MCF 10A (cell line): ENCODE measurements at regions of chr12 and their contacts with region 1.

Region 1: DNA sequence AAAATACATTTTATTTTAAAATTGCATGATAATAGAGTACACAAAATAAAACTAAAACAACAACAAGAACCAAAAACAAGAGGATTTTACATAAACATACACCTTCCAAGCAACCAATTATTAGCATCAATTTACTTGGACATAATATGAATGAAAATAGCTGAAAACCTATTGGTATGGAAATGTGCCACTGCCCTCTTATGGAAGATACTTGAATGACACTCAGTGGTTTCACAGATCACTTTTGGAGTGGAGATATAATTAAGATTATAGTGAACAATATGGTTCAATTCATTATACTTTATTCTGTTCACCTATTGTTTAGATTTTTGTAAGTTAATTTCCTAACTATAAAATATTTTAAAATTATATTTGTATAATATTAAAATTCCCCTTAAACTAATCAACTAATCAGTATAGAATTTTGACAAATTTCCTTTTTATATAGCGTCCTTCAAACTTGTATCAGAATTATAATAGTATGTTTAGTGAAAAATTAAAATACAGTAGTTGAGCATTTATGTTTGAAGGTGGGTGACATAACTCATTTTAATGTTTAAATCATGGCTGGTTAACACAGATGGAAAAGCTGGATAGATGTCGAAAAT is 70.1 kb downstream of the SLC6A15 start:
- DNase-seq: peak; percentile 59
- H3K4me3 Mint-ChIP-seq: no peak overlapping the region
- H3K27ac Mint-ChIP-seq: no peak overlapping the region
- H3K4me1 Mint-ChIP-seq: no peaks in the 10 kb centered on the region
- H3K27me3 Mint-ChIP-seq: no peaks in the 10 kb centered on the region
- CTCF ChIP-seq: peak; percentile 59

Region 2: DNA sequence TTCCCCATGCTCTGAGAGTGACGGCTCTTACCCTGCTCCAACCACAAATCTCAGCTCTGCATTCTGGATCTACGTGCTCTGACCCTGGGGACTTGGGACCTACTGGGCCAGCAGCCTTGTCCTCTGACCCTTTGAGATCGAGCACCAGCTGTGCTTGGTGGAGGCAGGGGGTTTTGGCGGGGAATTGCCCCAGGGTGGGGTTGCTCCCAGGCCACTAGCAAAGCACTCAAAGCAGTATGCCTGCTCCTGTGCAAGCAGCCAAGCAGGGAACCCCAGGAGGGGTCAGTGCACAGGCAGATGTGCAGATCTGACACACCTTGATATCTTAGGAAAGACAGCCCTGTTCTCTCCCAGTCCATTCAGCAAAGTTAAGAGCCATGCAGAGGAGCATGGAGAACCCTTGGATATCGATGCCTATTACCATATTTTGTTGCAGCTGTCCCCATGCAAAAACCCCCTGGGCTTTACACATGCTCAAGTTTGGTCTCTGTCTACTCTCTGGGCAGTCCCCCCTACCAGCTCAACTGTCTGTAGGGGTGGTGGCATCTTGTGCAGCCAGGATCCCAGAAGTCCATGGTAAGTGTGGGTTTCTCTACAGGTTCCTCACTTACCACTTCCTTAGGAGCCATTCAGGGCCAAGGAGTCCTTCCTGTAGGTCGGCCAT is 1836.8 kb before region 1 on chr12:
- CTCF ChIA-PET with region 1: no interaction called
- POLR2A ChIA-PET with region 1: no interaction called
- intact Hi-C with region 1: loop called (anchors 10 kb)
- DNase-seq: no peak
- H3K4me3 Mint-ChIP-seq: no peak overlapping the region
- H3K27ac Mint-ChIP-seq: no peak overlapping the region
- H3K4me1 Mint-ChIP-seq: no peaks in the 10 kb centered on the region
- H3K27me3 Mint-ChIP-seq: no peaks in the 10 kb centered on the region
- CTCF ChIP-seq: no peak

Region 3: DNA sequence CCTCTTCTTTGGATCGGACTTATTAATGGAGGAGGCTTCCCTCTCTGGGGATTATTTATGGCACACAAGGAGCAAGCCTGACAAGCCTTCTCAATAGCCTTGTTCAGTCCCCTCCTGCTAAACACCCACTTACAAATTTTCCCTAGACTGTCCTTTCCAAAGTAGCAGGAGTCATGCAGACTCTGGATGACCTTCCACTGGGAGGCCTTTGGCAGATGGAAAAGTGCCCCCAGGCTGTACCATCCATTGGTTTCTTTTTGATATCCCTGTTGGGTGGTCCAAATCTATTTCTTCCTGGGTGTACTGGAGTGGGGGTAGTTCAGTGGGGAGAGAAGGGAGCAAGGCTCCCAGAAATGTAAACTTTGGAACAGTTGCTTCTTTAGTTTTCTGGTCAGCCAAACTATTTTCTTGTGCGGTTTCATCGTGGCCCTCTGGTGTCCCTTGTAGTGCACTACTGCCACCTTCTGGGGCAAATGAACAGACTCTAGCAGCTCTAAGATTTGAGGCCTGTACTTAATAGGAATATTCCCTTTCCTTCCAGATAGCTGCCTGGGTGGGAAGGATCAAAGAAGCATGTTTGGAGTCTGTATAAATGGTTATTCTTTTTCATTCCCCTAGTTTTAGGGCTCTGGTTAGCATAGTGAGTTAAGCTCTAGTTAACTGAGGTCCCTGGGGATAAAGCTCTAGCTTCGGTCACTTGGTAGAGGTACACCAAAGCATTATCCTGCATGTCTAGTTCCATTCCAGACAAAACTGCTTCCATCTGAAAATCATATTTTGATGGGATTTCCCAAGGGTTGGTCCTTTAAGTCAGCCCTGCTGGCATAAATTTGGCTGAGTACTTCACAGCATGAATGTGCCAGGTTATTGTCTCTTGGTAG is 339.4 kb before region 1 on chr12:
- CTCF ChIA-PET with region 1: interaction called, 8 read pairs
- POLR2A ChIA-PET with region 1: no interaction called
- intact Hi-C with region 1: loop called (anchors 1 kb)
- DNase-seq: peak; percentile 76
- H3K4me3 Mint-ChIP-seq: no peak overlapping the region
- H3K27ac Mint-ChIP-seq: no peak overlapping the region
- H3K4me1 Mint-ChIP-seq: peaks cover 23% of the 10 kb centered on the region
- H3K27me3 Mint-ChIP-seq: no peaks in the 10 kb centered on the region
- CTCF ChIP-seq: peak; percentile 51

Region 4: GRCh38 chr12:84507956-84508850 is 334.3 kb before region 1 on chr12:
- CTCF ChIA-PET with region 1: interaction called, 8 read pairs
- POLR2A ChIA-PET with region 1: no interaction called
- intact Hi-C with region 1: loop called (anchors 1 kb)
- DNase-seq: peak; percentile 76
- H3K4me3 Mint-ChIP-seq: peak overlapping the region; percentile 32
- H3K27ac Mint-ChIP-seq: peak overlapping the region; percentile 57
- H3K4me1 Mint-ChIP-seq: peaks cover 22% of the 10 kb centered on the region
- H3K27me3 Mint-ChIP-seq: no peaks in the 10 kb centered on the region
- CTCF ChIP-seq: peak; percentile 45

Region 5: GRCh38 chr12:84624601-84625000 is 217.9 kb before region 1 on chr12:
- CTCF ChIA-PET with region 1: interaction called, 9 read pairs
- POLR2A ChIA-PET with region 1: no interaction called
- intact Hi-C with region 1: loop called (anchors 5 kb)
- DNase-seq: no peak
- H3K4me3 Mint-ChIP-seq: no peak overlapping the region
- H3K27ac Mint-ChIP-seq: no peak overlapping the region
- H3K4me1 Mint-ChIP-seq: no peaks in the 10 kb centered on the region
- H3K27me3 Mint-ChIP-seq: no peaks in the 10 kb centered on the region
- CTCF ChIP-seq: no peak

Region 6: GRCh38 chr12:85280165-85280983 is 437.9 kb after region 1 on chr12 and contains the start of gene ALX1:
- CTCF ChIA-PET with region 1: no interaction called
- POLR2A ChIA-PET with region 1: no interaction called
- intact Hi-C with region 1: no loop called
- DNase-seq: no peak
- H3K4me3 Mint-ChIP-seq: no peak within 1 kb of the TSS
- H3K27ac Mint-ChIP-seq: no peak within 1 kb of the TSS
- H3K4me1 Mint-ChIP-seq: no peaks in the 10 kb centered on the region
- H3K27me3 Mint-ChIP-seq: no peaks in the 10 kb centered on the region
- CTCF ChIP-seq: no peak
- total RNA-seq, gene ALX1: not detected in 2 replicates